ENCODE measurements at regions of chr1 and their contacts with region 1.

Region 1: DNA sequence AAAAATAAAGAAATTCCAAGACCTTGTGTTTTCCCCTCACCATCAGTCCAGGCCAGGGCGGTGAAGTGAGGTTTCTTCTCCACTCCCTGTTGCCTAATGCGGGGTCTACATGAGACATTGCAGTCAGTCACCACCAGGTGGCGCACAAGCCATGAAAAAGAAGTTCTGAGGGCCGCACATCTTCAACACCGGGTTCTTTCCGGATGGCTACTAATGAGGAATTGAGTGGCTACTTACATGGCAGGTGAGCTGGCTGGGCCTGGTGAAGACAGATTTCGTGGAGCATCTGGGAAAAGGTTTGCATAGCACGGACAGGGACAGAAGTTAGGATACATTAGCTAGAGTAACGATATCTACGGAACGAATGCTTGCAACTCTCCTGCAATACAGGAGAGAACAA is 15.8 kb upstream of the S100A11 start:
- DNase-seq: peak; percentile 62
- CTCF ChIP-seq: peak; percentile 90

Region 2: DNA sequence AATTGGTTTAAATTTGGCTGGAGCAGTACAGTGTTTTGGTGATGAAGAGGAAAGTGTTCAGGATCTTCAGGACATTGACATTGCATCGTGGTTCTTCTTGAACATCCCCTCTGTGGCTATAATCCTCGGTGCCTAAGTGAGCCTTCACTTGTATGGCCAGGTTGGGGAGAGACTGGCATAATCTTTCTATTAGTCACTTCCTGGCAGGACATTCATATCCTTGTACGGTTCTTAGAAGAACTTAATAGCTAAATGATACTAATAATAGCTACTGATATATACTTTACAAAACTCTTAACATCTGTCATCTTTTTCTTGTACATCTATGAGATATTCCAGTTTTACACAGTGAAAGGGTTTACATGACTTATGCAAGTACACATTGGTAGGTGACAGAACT is 371.8 kb before region 1 on chr1:
- in situ Hi-C with region 1: no loop called
- DNase-seq: no peak
- CTCF ChIP-seq: no peak

Region 3: DNA sequence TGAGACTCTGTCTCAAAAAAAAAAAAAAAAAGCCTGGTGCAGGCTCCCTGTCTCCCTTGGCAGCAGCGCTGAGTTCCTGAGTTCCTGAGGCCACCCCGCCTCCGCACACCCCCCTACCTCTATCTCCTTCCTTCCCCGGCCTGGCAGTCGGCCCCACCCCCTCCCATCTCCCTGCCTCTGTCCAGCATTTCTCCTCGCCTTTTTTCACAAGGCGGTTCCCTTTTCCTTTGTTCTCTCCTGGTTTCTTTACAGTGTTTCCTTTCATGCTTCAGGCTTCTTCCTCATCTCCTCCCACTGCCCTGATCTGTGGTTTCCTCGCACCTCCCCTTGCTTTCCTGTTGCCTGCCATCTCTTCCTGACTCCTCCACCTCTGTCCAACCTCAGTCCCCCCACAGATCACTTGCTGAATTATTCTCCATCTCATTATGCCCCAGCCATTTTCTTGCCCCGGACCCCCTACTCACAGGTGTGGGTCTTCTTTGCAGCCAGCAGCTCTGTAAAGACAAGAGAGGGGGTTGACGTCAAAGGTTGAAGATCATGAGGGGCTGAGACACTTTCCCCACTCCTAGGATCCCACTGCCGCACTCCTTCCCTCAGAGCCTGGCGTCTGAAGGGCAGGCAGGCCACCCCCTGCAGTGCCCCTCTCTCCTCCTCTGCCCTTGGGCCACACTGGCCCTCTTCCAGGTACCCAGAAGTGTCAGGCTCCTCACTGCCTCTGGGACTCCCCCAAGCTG is 223.5 kb before region 1 on chr1:
- in situ Hi-C with region 1: no loop called
- DNase-seq: no peak
- CTCF ChIP-seq: no peak

Region 4: DNA sequence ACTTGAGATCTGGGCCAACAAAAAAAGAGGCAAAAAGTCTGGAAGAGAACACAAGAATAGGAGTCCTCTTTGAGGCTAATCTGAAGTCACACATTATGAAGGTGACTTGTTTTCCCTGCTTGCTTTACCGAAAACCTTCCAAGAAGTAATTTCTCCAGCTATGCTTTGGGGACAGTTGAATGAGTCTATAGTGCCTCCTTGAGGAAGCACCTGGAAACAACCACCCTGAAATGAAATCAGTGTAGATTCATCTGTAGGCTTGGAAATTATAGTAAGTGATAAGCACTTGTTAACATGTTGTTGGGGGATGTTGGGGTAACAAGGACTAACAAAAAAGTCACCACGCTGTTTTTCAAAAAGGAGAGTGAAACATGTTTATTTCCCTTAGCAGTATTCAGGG is 129.8 kb after region 1 on chr1:
- in situ Hi-C with region 1: loop called (anchors 5 kb)
- DNase-seq: no peak
- CTCF ChIP-seq: peak; percentile 53

Region 5: GRCh38 chr1:152198982-152199381 is 146.4 kb after region 1 on chr1:
- in situ Hi-C with region 1: no loop called
- DNase-seq: no peak
- CTCF ChIP-seq: no peak

Region 6: GRCh38 chr1:152459596-152460528 is 407.3 kb after region 1 on chr1:
- in situ Hi-C with region 1: loop called (anchors 25 kb)
- DNase-seq: peak; percentile 76
- CTCF ChIP-seq: peak; percentile 80